Mammary epithelial cell (primary cell): ENCODE measurements at regions of chr9 and their contacts with region 1.

Region 1: DNA sequence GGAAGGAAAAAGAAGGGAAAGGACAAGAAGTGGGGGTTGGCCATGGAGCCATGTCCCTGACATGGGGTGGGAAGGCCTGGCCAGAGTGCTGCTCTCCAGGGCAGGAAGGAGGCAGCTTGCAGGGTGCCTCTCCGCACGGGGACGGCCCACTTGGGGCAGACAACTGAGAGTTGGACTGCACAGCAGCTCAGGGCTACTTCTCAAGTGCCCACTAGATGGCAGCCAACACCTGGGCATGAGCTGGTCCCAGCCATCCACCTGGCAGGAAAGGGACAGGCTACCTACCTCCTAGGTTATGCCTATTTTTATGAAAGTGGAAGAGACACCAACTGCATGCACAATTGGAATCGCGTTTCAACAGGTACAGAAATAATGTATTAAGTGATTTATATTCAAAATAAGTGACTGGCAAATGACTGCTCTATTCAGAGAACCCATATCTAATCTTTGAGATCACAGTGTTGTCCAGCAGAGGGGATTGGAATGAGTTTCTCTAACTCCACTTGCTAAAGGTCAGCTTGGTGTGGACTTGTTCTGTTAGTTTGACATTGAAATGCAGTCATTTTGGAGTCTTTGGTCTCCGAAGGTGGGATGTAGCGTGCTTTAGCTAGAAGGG is 113.4 kb downstream of the SYK start:
- DNase-seq: peak; percentile 74
- H3K4me3 ChIP-seq: no peak overlapping the region
- H3K27ac ChIP-seq: no peak overlapping the region
- H3K4me1 ChIP-seq: peaks cover under 1% of the 10 kb centered on the region
- H3K27me3 ChIP-seq: no peaks in the 10 kb centered on the region
- CTCF ChIP-seq: peak; percentile 80 to 90

Region 2: GRCh38 chr9:90985631-90986030 is 70.7 kb after region 1 on chr9:
- CTCF ChIA-PET with region 1: interaction called, 9 read pairs
- dilution Hi-C with region 1: no loop called
- in situ Hi-C with region 1: no loop called
- intact Hi-C with region 1: loop called (anchors 1 kb)
- DNase-seq: peak; percentile 96
- H3K4me3 ChIP-seq: no peak overlapping the region
- H3K27ac ChIP-seq: peak overlapping the region; percentile 80
- H3K4me1 ChIP-seq: peaks cover 36% of the 10 kb centered on the region
- H3K27me3 ChIP-seq: no peaks in the 10 kb centered on the region
- CTCF ChIP-seq: no peak

Region 3: DNA sequence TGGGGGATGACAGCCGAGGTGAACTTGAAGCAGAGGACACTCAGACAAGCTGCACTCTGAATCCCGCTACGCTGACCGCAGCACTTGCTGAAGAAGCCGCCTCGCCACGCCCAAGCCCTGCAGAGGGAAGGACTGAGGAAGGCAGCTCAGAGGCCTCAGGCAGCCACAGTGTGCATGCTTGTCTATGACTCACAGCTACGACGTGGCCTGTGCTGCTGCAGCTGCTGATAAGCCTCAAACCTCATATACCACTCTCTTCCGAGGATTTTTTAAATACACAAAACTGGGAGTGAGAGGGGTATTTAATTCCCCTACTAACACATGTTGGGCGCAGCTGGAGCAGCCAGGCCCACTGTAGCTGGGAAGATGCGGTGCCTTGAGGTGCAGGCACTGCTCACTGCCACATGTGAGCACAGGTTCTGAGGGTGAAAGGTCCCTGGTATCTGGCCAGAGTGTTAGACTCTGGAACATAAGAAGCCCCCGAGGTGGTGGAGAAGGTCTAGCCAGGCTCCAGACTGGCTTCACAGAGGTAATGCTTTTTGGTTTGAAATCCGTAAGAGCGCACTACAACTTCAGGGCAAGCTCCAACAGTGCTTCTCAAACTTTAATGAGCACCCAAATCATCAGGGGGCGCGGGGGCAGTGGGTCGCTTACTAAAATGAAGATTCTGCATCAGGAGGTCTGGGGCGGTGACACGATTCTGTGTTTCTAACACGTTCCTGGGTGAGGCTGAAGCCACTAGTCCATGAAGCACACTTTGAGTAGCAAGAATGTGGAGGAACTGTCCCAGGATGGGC is 249.9 kb after region 1 on chr9:
- CTCF ChIA-PET with region 1: no interaction called
- dilution Hi-C with region 1: no loop called
- in situ Hi-C with region 1: no loop called
- intact Hi-C with region 1: loop called (anchors 5 kb)
- DNase-seq: peak; percentile 93
- H3K4me3 ChIP-seq: no peak overlapping the region
- H3K27ac ChIP-seq: peak overlapping the region; percentile 18
- H3K4me1 ChIP-seq: peaks cover 41% of the 10 kb centered on the region
- H3K27me3 ChIP-seq: no peaks in the 10 kb centered on the region
- CTCF ChIP-seq: no peak

Region 4: DNA sequence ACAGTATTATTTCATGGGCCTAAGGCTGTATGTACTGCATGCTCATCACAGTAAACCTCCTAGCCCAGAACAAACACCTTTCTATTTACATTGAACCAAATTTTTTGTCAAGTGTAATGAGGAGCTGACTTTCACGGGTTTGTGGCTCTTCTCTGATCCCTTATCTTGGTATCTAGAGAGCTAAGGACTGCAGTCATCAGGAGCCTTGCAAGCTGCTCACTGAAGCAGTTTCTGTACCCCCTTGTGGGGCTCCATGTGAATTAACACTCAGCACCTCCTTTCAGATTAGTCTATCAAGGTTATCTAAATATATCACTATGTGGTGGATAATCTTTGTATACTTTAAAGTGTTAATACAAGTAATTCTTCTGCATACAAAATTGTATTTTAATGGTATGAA is 338.5 kb after region 1 on chr9:
- CTCF ChIA-PET with region 1: no interaction called
- dilution Hi-C with region 1: no loop called
- in situ Hi-C with region 1: no loop called
- intact Hi-C with region 1: loop called (anchors 10 kb)
- DNase-seq: peak; percentile 9
- H3K4me3 ChIP-seq: no peak overlapping the region
- H3K27ac ChIP-seq: no peak overlapping the region
- H3K4me1 ChIP-seq: no peaks in the 10 kb centered on the region
- H3K27me3 ChIP-seq: no peaks in the 10 kb centered on the region
- CTCF ChIP-seq: peak in 1 of 2 donors; percentile 10

Region 5: DNA sequence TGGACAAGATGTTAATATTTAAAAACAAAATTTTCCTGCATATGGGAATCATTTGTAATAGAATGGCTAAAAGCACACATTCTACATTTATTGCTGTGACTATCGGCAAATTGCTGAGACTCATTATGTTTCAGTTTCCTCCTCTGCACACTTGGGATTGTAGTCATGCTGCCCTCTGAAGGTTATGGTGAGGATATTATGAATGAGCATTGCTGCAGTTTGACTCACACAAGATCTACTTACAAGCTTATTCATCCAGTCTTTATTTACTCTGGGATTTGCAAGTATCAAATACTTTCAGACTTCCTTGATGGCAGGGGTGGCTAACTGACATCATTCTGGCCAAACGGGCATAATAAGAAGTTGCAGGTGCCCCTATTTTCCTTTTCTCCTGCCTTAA is 518.2 kb after region 1 on chr9:
- CTCF ChIA-PET with region 1: no interaction called
- dilution Hi-C with region 1: no loop called
- in situ Hi-C with region 1: loop called (anchors 5 kb)
- intact Hi-C with region 1: loop called (anchors 1 kb)
- DNase-seq: peak; percentile 84
- H3K4me3 ChIP-seq: no peak overlapping the region
- H3K27ac ChIP-seq: no peak overlapping the region
- H3K4me1 ChIP-seq: peaks cover 3% of the 10 kb centered on the region
- H3K27me3 ChIP-seq: no peaks in the 10 kb centered on the region
- CTCF ChIP-seq: peak; percentile 47 to 64

Region 6: GRCh38 chr9:91711755-91712601 is 797.0 kb after region 1 on chr9:
- CTCF ChIA-PET with region 1: no interaction called
- dilution Hi-C with region 1: no loop called
- in situ Hi-C with region 1: loop called in 1 of 2 experiments (anchors 25 kb)
- intact Hi-C with region 1: no loop called
- DNase-seq: no peak
- H3K4me3 ChIP-seq: no peak overlapping the region
- H3K27ac ChIP-seq: no peak overlapping the region
- H3K4me1 ChIP-seq: no peaks in the 10 kb centered on the region
- H3K27me3 ChIP-seq: peaks cover 2% of the 10 kb centered on the region
- CTCF ChIP-seq: no peak